K562 (cell line): ENCODE measurements at regions of chr6 and their contacts with region 1.

Region 1: GRCh38 chr6:123415844-123416468 is 220.8 kb downstream of the TRDN start:
- DNase-seq: peak; percentile 10 to 66 (median 32)
- ATAC-seq: peak; percentile 79
- H3K4me3 ChIP-seq: no peak overlapping the region
- H3K27ac ChIP-seq: no peak overlapping the region
- H3K4me1 ChIP-seq: no peaks in the 10 kb centered on the region
- H3K27me3 ChIP-seq: no peaks in the 10 kb centered on the region
- CTCF ChIP-seq: peak; percentile 47 to 74 (median 48)
- EP300 ChIP-seq: no peak
- POLR2A ChIP-seq: no peak
- RAD21 ChIP-seq: peak; percentile 71 to 88

Region 2: DNA sequence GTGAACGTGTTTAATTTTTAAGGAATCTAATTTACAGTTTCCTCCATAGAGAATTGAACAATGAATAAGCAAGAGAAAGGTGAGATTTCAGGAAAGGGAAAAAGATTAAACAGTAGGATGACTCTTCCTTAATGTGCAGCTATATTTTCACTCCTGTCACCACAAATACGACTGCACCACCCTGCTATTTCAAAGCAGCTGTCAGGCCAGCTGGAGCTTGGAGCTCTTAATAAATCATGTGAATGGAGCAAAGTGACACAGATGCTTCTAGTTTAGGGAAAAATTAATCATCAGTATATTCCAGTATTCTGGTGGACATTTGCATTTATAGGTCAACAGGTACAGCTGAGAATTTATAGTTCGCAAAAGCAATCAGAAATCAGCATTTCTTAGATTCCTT is 862.3 kb before region 1 on chr6:
- CTCF ChIA-PET with region 1: no interaction called
- POLR2A ChIA-PET with region 1: no interaction called
- in situ Hi-C with region 1: no loop called
- intact Hi-C with region 1: no loop called
- DNase-seq: no peak
- ATAC-seq: no peak
- H3K4me3 ChIP-seq: no peak overlapping the region
- H3K27ac ChIP-seq: no peak overlapping the region
- H3K4me1 ChIP-seq: no peaks in the 10 kb centered on the region
- H3K27me3 ChIP-seq: no peaks in the 10 kb centered on the region
- CTCF ChIP-seq: no peak
- EP300 ChIP-seq: no peak
- POLR2A ChIP-seq: no peak
- RAD21 ChIP-seq: no peak

Region 3: DNA sequence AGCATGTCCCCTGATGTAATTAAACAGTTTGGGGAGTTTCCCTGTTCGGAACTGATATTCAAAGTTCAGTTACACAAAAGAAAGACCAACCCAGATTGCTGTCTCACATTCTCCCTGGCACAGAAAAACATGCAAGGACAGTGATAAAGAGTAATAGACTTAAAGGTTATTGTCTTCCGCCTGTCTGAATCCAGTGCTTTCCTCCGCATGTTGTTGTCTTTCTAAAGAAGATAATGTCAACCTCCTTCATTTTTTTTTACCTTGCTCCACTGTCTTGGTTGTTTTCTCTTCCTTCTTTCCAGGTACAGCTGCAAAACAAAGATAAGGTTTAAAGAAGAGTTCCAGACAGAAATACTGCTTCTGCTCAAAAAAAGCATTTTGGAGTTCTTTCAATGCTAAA is 63.7 kb before region 1 on chr6:
- CTCF ChIA-PET with region 1: no interaction called
- POLR2A ChIA-PET with region 1: no interaction called
- in situ Hi-C with region 1: no loop called
- intact Hi-C with region 1: no loop called
- DNase-seq: peak in 2 of 4 experiments; percentile 30 to 57
- ATAC-seq: peak; percentile 82
- H3K4me3 ChIP-seq: no peak overlapping the region
- H3K27ac ChIP-seq: peak overlapping the region; percentile 36; the same call in 1 of the 3 replicates
- H3K4me1 ChIP-seq: no peaks in the 10 kb centered on the region; a peak in 1 of 5 replicates
- H3K27me3 ChIP-seq: no peaks in the 10 kb centered on the region
- CTCF ChIP-seq: no peak
- EP300 ChIP-seq: peak; percentile 26; the same call in 1 of the 2 replicates
- POLR2A ChIP-seq: no peak
- RAD21 ChIP-seq: no peak

Region 4: DNA sequence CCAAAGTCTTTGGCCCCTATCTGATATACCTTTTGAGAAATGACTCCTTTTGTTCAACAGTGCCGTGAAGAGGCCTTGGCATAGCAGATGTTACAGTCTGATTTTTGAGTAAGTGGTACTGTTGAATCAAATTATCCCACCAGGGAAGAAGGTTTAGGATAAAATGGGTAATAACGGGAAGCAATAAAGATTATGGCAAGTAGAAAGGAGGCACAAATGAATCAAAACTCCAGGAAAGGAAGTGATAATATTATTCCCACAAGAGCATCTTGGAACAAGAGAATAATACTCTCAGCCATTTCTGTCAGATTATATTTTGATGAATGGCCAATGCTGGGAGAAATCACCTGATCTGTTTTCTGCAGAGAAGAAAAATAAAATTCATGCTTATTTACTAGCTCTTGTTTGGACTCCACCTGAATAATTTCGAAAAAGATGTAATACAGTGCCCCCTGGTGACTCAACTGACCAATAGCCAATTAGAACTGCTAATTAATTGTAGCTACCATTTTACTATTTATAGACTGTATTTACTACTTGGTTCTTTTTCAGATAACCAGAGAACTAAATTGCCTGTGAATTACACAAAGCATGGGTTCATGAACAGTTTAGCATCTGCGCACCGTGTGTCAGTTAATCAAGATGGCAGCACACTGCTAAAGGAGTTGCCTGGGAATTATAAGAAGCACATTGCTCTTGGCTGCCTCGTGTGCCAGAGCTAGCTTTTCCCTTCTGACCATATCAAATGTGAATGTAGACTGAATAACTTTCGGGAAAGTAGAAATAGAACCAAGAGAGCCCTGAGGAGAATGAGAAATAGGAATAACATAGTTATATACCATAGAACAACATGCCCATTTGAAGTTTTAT is 299.3 kb after region 1 on chr6:
- CTCF ChIA-PET with region 1: interaction called, 22 read pairs
- POLR2A ChIA-PET with region 1: no interaction called
- in situ Hi-C with region 1: loop called (anchors 25 kb)
- intact Hi-C with region 1: loop called (anchors 1 kb)
- DNase-seq: peak in 3 of 4 experiments; percentile 7 to 31 (median 8)
- ATAC-seq: peak; percentile 53; the same call in 2 of the 3 replicates
- H3K4me3 ChIP-seq: no peak overlapping the region
- H3K27ac ChIP-seq: no peak overlapping the region
- H3K4me1 ChIP-seq: no peaks in the 10 kb centered on the region; a peak in 1 of 5 replicates
- H3K27me3 ChIP-seq: no peaks in the 10 kb centered on the region
- CTCF ChIP-seq: peak; percentile 35 to 52 (median 35); a peak in 3 of 6 replicates
- EP300 ChIP-seq: no peak
- POLR2A ChIP-seq: no peak
- RAD21 ChIP-seq: peak; percentile 75 to 83